AG04449 (cell line): ENCODE measurements at regions of chr18 and their contacts with region 1.

Region 1: DNA sequence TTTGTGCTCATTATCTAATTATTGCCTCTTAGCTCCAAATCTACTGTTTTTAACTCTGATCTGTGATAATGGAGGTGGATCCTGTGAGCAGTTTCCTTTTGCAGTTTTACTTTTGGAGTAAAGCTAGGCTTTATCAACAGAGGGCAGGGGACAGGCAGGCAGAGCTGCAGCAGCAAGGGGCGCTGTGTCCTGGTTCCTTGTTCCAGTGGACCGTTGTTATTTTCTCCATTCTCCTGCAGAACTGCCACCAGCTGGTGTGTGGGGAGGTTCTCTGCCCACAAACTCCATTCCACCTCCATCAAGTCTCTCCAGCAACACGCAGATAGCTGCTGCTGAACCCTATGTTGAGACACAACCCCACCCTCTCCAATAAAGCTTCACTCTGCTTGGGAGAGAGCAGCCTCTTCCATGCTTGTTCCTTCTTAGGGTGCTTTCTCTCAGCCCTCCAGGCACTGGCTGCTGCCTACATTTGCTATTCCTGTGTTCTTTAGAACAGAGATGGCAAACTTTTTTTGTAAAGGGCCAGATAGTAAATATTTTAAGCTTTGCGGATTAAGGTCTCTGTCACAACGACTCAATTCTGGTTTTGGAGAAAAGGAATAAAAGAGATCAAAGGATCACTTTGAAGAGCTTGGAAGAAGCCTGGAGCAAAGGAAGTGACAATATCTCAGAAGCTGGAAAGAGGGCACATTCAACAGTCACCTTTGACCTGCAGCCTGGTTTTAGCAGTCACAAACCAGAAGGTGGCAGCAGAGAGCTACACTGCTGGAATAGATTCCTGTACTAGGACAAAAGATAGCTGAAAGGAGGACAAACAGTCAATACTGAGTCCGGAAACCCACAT is 208.8 kb downstream of the CCDC178 start:
- DNase-seq: no peak
- H3K4me3 ChIP-seq: no peak overlapping the region
- CTCF ChIP-seq: peak; percentile 88

Region 2: DNA sequence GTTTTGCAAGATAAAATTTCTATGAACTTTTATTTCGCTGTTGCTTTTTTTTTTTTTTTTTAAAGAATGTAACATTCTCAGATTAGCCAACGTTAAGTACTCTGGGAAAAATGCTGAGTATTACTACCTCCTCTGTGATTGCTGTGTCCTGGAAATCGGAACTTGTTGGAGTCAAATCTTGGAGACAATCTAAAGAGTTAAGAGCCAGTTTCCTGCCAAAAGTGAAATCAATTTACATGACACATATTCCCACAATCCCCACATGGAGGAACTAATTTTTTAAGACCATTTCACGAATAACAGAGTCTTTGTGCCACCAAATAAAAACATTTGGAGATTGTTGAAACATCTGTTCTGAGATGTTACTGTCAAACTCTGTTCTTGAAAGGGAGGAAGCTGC is 914.0 kb before region 1 on chr18:
- CTCF ChIA-PET with region 1: no interaction called
- POLR2A ChIA-PET with region 1: no interaction called
- DNase-seq: no peak
- H3K4me3 ChIP-seq: no peak overlapping the region
- CTCF ChIP-seq: no peak

Region 3: DNA sequence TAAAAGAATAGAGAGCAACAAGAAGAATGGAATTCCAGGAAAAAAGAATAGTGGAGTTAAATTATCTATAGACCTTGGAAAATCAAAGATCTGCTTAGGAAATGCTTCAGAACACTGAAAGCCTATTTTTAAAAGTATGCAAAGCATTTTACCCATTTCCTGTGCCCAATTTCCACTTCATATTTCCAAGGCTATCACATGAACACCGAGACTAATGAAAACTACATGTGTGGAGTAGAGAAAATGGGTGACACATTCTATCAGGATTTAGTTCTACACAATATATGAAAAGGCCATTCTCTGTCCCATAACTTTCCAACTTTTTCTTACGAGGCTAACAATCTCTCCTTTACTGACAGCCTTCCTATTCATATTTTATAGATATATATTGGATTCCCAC is 70.6 kb before region 1 on chr18:
- CTCF ChIA-PET with region 1: no interaction called
- POLR2A ChIA-PET with region 1: no interaction called
- DNase-seq: no peak
- H3K4me3 ChIP-seq: no peak overlapping the region
- CTCF ChIP-seq: no peak

Region 4: DNA sequence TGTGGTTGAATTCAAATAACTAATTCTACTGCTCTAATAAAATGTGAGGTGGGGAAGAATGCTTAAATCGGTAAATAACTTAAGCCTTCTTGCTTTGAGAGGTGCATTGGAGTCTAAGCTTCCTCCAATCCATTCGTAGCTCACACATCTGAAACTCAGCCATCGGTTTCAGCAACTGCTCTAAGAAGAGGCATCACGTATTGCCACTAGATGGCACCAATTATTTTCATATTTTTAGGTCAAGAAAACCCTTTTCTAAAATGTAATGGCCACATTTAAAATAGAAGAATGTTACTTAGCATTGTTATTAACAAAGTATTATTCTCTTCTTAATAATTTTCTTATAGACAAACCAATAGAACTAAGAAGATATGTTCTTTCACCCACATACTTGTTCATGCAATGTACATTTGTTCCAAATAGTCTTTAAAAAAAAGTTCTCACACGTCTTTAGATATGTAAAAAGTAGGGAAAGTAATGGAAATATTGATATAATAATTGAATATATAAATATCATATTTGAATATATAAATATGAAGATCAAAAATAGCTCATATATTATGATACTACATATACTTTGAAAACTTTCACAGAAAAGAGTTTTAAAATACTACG is 21.0 kb before region 1 on chr18:
- CTCF ChIA-PET with region 1: interaction called, 12 read pairs
- POLR2A ChIA-PET with region 1: no interaction called
- DNase-seq: no peak
- H3K4me3 ChIP-seq: no peak overlapping the region
- CTCF ChIP-seq: peak; percentile 35

Region 5: DNA sequence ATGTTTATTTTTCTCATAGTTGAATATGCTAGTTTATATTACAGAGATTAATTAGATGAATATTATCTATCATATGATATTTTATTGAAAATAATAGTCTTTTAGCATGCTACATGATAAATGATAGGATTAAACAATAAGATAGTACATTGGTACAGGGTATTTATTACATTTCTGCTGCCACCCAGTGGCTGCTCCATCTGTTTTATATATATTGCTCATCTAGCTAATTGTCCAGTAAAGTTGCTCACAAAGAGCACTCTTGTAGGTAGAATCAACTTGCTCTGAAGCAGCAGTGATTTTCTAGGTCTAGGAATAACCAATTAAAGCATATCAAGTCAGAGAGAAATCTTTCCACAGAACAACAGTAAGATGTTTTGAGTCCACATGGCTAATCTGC is 529.7 kb after region 1 on chr18:
- CTCF ChIA-PET with region 1: interaction called, 12 read pairs
- POLR2A ChIA-PET with region 1: no interaction called
- DNase-seq: no peak
- H3K4me3 ChIP-seq: no peak overlapping the region
- CTCF ChIP-seq: no peak